ENCODE measurements at regions of chr20 and their contacts with region 1.

Region 1: GRCh38 chr20:33777816-33778215 is 33.3 kb upstream of the CHMP4B start:
- DNase-seq: no peak
- ATAC-seq: no peak
- H3K4me3 ChIP-seq: no peak overlapping the region
- H3K4me3 Mint-ChIP-seq: no peak overlapping the region
- H3K27ac ChIP-seq: peak overlapping the region; percentile 35
- H3K27ac Mint-ChIP-seq: no peak overlapping the region
- H3K4me1 ChIP-seq: peaks cover 19% of the 10 kb centered on the region
- H3K4me1 Mint-ChIP-seq: peaks cover 0 to 9% of the 10 kb centered on the region in 2 donors
- H3K27me3 ChIP-seq: no peaks in the 10 kb centered on the region
- H3K27me3 Mint-ChIP-seq: no peaks in the 10 kb centered on the region
- CTCF ChIP-seq: no peak

Region 2: GRCh38 chr20:33709905-33710541 is 67.8 kb before region 1 on chr20:
- intact Hi-C with region 1: loop called (anchors 2 kb)
- DNase-seq: no peak
- ATAC-seq: no peak
- H3K4me3 ChIP-seq: no peak overlapping the region
- H3K4me3 Mint-ChIP-seq: no peak overlapping the region
- H3K27ac ChIP-seq: no peak overlapping the region
- H3K27ac Mint-ChIP-seq: no peak overlapping the region
- H3K4me1 ChIP-seq: no peaks in the 10 kb centered on the region
- H3K4me1 Mint-ChIP-seq: peaks cover 0 to 11% of the 10 kb centered on the region in 2 donors
- H3K27me3 ChIP-seq: no peaks in the 10 kb centered on the region
- H3K27me3 Mint-ChIP-seq: no peaks in the 10 kb centered on the region
- CTCF ChIP-seq: no peak

Region 3: GRCh38 chr20:33896509-33896908 is 118.7 kb after region 1 on chr20:
- intact Hi-C with region 1: no loop called
- DNase-seq: no peak
- ATAC-seq: no peak
- H3K4me3 ChIP-seq: no peak overlapping the region
- H3K4me3 Mint-ChIP-seq: no peak overlapping the region
- H3K27ac ChIP-seq: no peak overlapping the region
- H3K27ac Mint-ChIP-seq: no peak overlapping the region
- H3K4me1 ChIP-seq: no peaks in the 10 kb centered on the region
- H3K4me1 Mint-ChIP-seq: no peaks in the 10 kb centered on the region
- H3K27me3 ChIP-seq: no peaks in the 10 kb centered on the region
- H3K27me3 Mint-ChIP-seq: peaks cover 8 to 22% of the 10 kb centered on the region in 2 donors
- CTCF ChIP-seq: no peak